SK-N-SH (cell line): ENCODE measurements at regions of chr12 and their contacts with region 1.

Region 1: GRCh38 chr12:120292661-120293531 is at the start of gene RNU4-1:
- DNase-seq: peak; percentile 57
- H3K4me3 ChIP-seq: peak within 1 kb of the TSS; percentile 50 to 70
- H3K27ac ChIP-seq: peak within 1 kb of the TSS; percentile 98 to 100
- H3K4me1 ChIP-seq: peaks cover 0 to 2% of the 10 kb centered on the region in 2 experiments; a peak in 2 of 4 replicates
- H3K27me3 ChIP-seq: no peaks in the 10 kb centered on the region
- CTCF ChIP-seq: no peak
- EP300 ChIP-seq: peak in 1 of 2 experiments; percentile 67; a peak in 1 of 4 replicates
- RAD21 ChIP-seq: no peak
- polyA plus RNA-seq, gene RNU4-1: not detected in 2 replicates

Region 2: DNA sequence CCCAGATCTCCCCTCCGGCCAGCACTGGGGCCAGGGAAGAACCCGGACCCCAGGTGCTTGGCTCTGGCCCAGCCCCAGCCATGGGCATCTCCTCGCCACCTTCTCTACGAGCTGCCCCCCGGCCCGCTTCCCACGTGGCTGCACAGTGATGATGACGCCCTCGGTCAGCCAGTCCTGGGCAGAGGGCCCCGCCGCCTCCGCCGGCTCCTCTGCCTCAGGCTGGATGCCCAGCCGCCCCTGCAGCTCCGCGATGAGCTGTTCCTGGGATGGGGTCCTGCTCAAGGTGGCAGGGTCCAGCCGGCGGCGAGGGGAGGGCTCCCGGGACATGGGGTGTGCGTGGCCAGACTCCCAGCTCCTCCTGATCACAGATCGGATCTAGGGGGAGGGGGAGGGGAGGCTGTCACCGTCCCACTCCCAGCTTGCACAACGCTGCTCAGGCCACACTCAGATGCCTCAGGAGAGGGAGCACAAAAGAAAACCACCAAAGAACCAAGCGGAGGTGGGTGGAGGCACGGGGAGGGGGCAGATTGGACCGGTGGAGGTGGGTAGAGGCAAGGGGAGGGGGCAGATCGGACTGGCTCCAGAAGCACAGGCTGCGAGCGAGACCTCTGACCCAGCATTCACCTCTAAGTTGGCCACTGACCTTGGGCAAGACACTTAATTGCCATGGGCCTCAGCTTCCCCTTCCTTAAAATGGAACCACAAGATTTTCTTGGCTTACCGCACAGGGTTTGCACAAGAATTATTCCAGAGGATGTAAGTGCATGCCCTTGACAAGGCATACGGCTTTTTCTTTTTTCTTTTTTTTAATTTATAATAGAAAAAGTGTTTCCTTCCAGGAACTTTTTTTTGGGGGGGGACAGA is 75.9 kb before region 1 on chr12:
- CTCF ChIA-PET with region 1: no interaction called
- POLR2A ChIA-PET with region 1: interaction called, 13 read pairs
- DNase-seq: peak; percentile 62
- H3K4me3 ChIP-seq: no peak overlapping the region
- H3K27ac ChIP-seq: no peak overlapping the region
- H3K4me1 ChIP-seq: no peaks in the 10 kb centered on the region
- H3K27me3 ChIP-seq: no peaks in the 10 kb centered on the region
- CTCF ChIP-seq: no peak
- EP300 ChIP-seq: no peak
- RAD21 ChIP-seq: no peak

Region 3: DNA sequence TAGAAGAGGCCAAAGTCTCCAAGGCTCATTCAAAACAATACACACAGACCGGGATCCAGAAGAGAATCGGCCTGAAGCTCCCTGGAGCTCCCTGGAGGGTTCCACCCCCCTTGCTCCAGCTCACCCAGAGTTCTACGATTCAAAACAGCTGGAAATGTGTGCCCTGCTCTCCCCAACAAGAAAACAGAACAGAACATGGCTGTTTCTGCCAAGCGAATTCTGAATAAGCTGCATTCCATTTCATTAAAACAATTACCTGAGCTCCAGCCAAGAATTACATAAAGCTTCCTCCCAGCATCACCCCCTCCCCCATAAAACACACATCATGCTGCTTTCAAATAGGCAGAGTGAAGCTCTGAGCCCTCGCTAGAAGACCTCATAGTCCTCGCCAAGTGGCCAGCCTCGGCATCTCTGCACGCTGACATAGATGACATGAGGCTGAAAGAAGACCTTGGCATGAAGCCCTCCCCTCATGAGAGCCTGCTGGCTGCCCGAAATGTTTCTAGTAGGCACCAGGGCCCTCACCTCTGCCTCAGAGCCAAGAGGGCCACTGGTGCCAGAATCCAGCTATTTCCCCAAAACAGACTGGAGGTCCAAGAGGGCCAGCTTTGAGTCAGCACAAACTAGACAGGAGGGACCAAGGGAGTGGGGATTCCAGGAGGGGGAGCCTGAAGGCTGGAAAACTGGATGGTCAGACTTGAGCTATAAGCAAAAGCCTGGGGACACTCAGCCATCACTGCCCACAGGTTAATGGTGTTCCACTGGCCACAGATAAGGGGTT is 35.7 kb before region 1 on chr12:
- CTCF ChIA-PET with region 1: no interaction called
- POLR2A ChIA-PET with region 1: interaction called, 22 read pairs
- DNase-seq: peak; percentile 54
- H3K4me3 ChIP-seq: peak overlapping the region in 1 of 2 experiments; percentile 36; a peak in 1 of 4 replicates
- H3K27ac ChIP-seq: peak overlapping the region; percentile 62 to 92
- H3K4me1 ChIP-seq: peaks cover 12 to 41% of the 10 kb centered on the region in 2 experiments; a peak in 3 of 4 replicates
- H3K27me3 ChIP-seq: no peaks in the 10 kb centered on the region
- CTCF ChIP-seq: peak; percentile 25
- EP300 ChIP-seq: peak in 1 of 2 experiments; percentile 78; a peak in 1 of 4 replicates
- RAD21 ChIP-seq: no peak

Region 4: DNA sequence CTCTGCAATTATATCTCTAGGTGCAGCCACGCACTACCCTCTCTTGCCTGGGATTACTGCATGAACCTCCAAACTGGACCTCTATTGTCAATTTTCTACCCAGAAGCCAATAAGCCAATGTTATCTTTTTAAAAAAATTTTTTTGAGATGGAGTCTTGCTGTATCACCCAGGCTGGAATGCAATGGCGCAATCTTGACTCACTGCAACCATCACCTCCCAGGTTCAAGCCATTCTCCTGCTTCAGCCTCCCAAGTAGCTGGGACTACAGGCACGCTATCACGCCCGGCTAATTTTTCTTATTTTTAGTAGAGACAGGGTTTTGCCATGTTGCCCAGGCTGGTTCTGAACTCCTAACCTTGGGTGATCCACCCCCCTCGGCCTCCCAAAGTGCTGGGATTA is 16.2 kb before region 1 on chr12:
- CTCF ChIA-PET with region 1: no interaction called
- POLR2A ChIA-PET with region 1: interaction called, 12 read pairs
- DNase-seq: no peak
- H3K4me3 ChIP-seq: no peak overlapping the region
- H3K27ac ChIP-seq: no peak overlapping the region
- H3K4me1 ChIP-seq: no peaks in the 10 kb centered on the region
- H3K27me3 ChIP-seq: no peaks in the 10 kb centered on the region
- CTCF ChIP-seq: no peak
- EP300 ChIP-seq: no peak
- RAD21 ChIP-seq: no peak

Region 5: DNA sequence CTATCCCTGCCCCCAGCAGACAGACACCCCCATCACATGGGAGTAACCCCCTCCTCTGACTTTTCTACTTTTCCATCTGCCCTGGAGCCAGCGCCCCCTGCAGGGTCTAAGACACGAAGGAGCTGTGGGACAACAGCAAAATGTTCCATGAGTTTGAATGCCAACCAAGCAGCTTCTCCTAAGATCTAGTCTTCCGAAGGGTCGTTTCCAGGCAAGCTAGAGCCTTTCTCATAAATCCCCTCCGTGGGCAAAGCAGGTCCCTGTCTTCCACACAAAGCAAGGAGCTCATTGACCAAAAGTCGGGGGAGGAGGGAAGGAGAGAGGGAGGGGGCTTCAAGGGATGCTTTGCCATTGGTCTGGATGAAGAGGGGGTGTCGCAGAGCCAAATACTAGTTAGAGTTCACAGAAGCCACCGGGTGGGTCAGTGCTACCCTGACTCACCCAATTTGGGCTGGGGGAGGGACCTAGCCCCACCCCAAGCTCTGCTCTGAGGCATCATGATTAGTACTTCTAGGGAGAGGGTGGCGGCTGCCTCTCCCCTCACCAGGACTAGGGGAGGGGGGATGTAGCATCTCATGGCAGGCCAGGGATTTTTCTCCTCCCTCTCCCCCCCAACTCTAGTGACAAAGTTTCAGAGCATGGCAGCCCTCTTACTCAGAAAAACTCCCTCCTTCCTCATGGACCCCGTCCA is 74.5 kb after region 1 on chr12:
- CTCF ChIA-PET with region 1: interaction called, 4 read pairs
- POLR2A ChIA-PET with region 1: interaction called, 12 read pairs
- DNase-seq: peak; percentile 70
- H3K4me3 ChIP-seq: peak overlapping the region; percentile 26 to 60; a peak in 3 of 4 replicates
- H3K27ac ChIP-seq: peak overlapping the region in 1 of 2 experiments; percentile 39; a peak in 1 of 4 replicates
- H3K4me1 ChIP-seq: peaks cover 0 to 35% of the 10 kb centered on the region in 2 experiments; a peak in 1 of 4 replicates
- H3K27me3 ChIP-seq: peaks cover 36% of the 10 kb centered on the region
- CTCF ChIP-seq: peak; percentile 60
- EP300 ChIP-seq: no peak
- RAD21 ChIP-seq: peak; percentile 39

Region 6: DNA sequence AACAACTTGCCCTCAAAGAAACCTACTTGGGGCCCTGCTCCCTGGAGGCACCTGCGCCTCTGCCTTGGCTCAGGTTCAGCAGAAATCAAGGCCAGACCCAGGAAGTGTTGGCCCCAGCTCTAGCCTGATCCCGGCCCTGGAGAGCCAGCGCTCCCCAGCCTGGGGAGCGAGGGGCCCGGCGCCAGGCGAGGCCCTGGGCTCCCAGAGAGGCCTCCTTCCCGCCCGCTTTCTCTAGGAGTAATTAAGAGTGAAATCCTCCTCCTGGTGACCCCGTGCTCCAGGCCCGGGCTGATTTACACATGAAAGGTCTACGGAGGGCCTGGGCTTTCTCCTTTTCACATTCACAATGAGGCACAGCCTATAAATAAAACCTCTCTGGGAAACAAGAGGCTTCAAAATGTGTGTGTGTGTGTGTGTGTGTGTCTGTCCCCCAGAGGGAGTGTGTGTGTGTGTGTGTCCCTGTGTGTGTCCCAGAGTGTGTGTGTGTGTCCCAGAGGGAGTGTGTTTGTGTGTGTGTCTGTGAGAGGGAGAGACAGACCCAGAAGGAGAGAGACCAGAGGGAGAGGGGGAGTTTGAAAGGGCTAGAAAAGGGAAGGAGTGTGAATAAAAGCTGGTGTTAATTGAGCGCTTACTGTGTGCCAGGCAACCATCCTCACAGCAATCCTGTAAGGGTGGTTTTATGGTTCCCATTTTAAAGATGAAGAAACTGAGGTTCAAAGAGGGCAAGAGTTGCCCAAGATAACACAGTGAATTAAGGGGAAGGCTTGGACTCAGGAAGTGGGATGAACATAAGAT is 121.2 kb after region 1 on chr12:
- CTCF ChIA-PET with region 1: no interaction called
- POLR2A ChIA-PET with region 1: no interaction called
- DNase-seq: no peak
- H3K4me3 ChIP-seq: no peak overlapping the region
- H3K27ac ChIP-seq: no peak overlapping the region
- H3K4me1 ChIP-seq: no peaks in the 10 kb centered on the region
- H3K27me3 ChIP-seq: no peaks in the 10 kb centered on the region; the same call in 1 of the 2 replicates
- CTCF ChIP-seq: no peak
- EP300 ChIP-seq: no peak
- RAD21 ChIP-seq: no peak